Dendritic cell treated with granulocyte-macrophage colony-stimulating factor and Interleukin-4, amounts not matched to agents 40 ng/mL and 50 ng/mL, for 4 days (primary cell): ENCODE measurements at regions of chr6 and their contacts with region 1.

Region 1: DNA sequence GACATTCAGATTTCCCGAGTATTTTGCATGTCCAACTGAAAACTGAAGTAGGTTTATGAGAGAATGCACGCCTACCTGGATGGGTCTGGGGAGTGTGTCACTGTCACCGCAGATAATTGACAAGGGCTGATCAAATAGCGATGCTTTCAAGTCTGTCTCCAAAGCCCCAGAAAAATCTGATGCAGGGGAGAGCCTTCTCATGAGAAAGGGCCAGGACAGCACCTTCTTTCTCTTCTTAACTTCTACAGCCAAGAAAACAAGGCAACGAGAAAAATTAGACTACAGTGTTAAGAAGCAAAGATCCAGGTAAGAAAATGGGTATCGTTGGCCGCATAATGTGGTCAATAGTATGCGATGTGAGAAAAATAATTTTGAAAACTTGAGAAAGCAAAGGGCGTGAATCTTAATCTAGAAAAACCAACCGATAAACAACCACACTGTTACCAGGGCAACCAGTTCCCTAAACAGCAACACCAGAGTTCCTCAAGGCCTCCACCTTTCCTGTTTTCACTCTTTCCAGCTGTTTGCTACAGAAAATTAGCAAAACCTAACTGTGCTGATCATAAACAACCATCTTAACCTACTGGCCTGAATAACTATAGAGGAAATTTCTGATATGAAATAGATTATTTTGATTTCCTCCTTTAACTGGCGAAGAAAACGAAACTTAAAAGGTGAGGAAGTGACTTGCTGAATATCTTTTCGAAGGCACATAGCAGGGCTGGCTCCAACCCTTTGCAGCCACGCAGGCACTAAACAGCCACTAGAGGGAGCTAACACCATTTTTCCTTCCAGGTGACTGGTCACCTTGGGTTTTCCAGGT is 2.6 kb downstream of the TAGAP start:
- H3K4me3 Mint-ChIP-seq: peak overlapping the region; percentile 82
- H3K27ac Mint-ChIP-seq: peak overlapping the region; percentile 97
- H3K4me1 Mint-ChIP-seq: peaks cover 60% of the 10 kb centered on the region
- H3K27me3 Mint-ChIP-seq: no peaks in the 10 kb centered on the region

Region 2: DNA sequence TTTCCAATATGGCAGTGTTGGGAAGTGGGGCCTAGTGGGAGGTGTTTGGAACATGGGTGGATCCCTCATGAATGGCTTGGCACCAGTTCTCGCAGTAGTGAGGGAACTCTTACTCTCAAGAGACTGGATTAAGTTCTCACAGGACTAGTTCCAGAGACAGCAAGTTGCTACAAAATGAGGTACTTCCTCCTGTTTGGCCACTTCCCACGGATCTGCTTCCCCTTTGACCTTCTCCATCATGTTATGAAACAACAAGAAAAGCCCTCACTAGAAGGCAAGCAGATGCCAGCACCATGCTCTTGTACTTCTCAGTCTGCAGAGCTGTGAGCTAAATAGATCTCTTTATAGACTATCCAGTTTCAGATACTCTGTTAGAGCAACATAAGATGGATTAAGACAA is 45.4 kb before region 1 on chr6:
- intact Hi-C with region 1: no loop called
- H3K4me3 Mint-ChIP-seq: no peak overlapping the region
- H3K27ac Mint-ChIP-seq: peak overlapping the region; percentile 63
- H3K4me1 Mint-ChIP-seq: peaks cover 34% of the 10 kb centered on the region
- H3K27me3 Mint-ChIP-seq: no peaks in the 10 kb centered on the region

Region 3: DNA sequence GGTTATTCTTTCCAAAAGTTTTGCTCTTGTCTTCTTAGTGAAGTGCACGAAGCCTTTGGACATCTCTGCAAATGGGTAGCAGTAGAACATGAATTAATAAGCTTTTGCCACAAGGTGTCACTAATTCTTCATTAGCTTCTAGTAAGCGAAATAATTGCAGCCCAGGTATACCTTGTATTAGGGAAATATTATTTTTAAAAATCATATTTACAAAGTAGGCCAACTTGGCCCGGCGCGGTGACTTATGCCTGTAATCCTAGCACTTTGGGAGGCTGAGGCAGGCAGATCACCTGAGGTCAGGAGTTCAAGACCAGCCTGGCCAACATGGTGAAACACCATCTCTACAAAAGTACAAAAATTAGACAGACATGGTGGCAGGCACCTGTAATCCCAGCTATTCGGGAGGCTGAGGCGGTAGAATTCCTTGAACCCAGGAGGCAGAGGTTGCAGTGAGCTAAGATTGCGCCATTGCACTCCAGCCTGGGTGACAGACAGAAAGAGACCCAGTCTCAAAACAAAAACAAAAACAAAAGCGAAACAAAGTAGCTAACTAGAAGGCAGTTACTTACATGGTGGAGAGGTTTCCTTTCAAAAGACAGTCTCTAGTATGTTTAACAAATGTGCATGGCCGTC is 33.4 kb before region 1 on chr6:
- intact Hi-C with region 1: loop called (anchors 5 kb)
- H3K4me3 Mint-ChIP-seq: no peak overlapping the region
- H3K27ac Mint-ChIP-seq: no peak overlapping the region
- H3K4me1 Mint-ChIP-seq: peaks cover 61% of the 10 kb centered on the region
- H3K27me3 Mint-ChIP-seq: no peaks in the 10 kb centered on the region

Region 4: GRCh38 chr6:159053781-159054398 is 11.7 kb after region 1 on chr6:
- intact Hi-C with region 1: loop called (anchors 1 kb)
- H3K4me3 Mint-ChIP-seq: no peak overlapping the region
- H3K27ac Mint-ChIP-seq: peak overlapping the region; percentile 37
- H3K4me1 Mint-ChIP-seq: peaks cover 56% of the 10 kb centered on the region
- H3K27me3 Mint-ChIP-seq: no peaks in the 10 kb centered on the region

Region 5: GRCh38 chr6:159062564-159062945 is 20.3 kb after region 1 on chr6:
- intact Hi-C with region 1: loop called (anchors 2 kb)
- H3K4me3 Mint-ChIP-seq: no peak overlapping the region
- H3K27ac Mint-ChIP-seq: peak overlapping the region; percentile 71
- H3K4me1 Mint-ChIP-seq: peaks cover 62% of the 10 kb centered on the region
- H3K27me3 Mint-ChIP-seq: peaks cover 4% of the 10 kb centered on the region

Region 6: DNA sequence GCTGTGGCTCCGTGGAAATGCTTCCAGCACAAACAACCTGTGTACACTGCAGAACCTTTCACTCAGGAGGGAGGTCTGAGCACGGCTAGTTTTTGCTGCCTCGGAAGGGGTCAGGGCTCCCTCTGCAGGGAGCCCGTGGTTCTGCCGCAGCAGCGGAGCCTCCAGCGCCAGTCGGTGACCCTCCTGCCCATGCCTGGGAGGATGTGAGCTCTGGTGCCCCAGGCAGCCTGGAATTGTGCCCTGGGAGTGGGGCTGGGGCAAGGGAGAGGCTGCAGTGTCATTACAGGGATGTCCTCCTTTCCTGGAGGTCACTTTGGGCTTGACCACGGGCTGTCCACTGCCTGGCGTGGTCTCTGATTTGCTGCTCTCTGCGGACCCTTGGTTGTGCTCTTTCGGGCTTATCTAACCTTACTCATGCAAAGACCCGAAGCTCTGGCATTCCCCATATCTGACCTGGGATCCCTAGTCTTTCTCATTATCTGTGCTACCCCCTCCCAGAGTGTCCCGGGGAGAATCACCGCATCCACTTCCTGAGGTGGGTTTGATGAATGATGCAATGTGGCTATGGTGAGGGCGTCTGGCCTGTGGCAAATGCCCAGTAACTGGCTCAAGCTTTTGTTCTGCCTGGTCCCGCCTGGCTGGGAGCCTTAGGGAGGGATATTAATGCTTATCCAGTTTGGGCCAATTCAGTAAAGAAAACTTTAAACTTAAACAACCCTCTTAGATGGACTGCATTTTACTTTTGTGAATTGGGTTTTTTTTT is 62.1 kb after region 1 on chr6:
- intact Hi-C with region 1: loop called (anchors 1 kb)
- H3K4me3 Mint-ChIP-seq: no peak overlapping the region
- H3K27ac Mint-ChIP-seq: peak overlapping the region; percentile 11
- H3K4me1 Mint-ChIP-seq: peaks cover 46% of the 10 kb centered on the region
- H3K27me3 Mint-ChIP-seq: no peaks in the 10 kb centered on the region

Region 7: DNA sequence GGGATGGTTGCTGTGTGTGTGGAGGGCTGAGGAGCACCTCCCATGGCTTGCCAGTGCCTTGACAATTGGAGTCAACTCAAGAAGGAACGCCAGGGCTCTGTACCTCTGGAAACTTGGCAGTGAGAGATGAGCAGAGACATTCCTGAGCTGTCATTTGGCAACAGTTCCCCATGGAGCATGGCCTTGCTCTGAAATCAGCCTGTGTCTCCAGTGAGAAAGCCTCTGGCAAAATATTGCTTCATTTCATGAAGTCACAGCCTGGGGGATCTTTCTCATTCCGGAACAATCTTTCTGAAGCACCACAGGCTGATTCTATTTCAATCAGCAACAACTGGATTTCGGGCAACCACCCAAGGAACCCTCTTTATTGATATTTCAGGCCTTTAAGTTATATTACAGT is 74.8 kb after region 1 on chr6:
- intact Hi-C with region 1: loop called (anchors 1 kb)
- H3K4me3 Mint-ChIP-seq: peak overlapping the region; percentile 20
- H3K27ac Mint-ChIP-seq: peak overlapping the region; percentile 99
- H3K4me1 Mint-ChIP-seq: peaks cover 88% of the 10 kb centered on the region
- H3K27me3 Mint-ChIP-seq: no peaks in the 10 kb centered on the region

Region 8: DNA sequence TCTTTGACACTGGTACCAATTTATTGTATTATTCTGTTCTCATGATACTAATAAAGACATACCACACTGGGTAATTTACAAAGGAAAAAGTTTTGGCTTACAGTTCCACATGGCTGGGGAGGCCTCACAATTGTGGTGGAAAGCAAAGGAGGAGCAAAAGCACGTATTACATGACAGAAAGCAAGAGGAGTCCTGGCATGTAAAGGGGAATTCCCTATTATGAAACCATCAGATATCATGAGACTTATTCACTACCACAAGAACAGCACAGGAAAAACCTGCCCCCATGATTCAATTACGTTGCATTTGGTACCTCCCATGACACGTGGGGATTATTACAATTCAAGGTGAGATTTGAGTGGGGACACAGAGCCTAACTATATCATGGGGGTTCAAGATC is 1173.0 kb after region 1 on chr6:
- intact Hi-C with region 1: no loop called
- H3K4me3 Mint-ChIP-seq: no peak overlapping the region
- H3K27ac Mint-ChIP-seq: no peak overlapping the region
- H3K4me1 Mint-ChIP-seq: no peaks in the 10 kb centered on the region
- H3K27me3 Mint-ChIP-seq: no peaks in the 10 kb centered on the region